PC-9 (cell line): ENCODE measurements at regions of chr4 and their contacts with region 1.

Region 1: GRCh38 chr4:108683479-108683878 is 33.1 kb downstream of the OSTC start:
- DNase-seq: no peak
- H3K4me3 ChIP-seq: no peak overlapping the region
- H3K27ac ChIP-seq: no peak overlapping the region
- H3K4me1 ChIP-seq: no peaks in the 10 kb centered on the region
- H3K27me3 ChIP-seq: no peaks in the 10 kb centered on the region
- CTCF ChIP-seq: peak; percentile 34; the same call in 1 of the 2 replicates

Region 2: DNA sequence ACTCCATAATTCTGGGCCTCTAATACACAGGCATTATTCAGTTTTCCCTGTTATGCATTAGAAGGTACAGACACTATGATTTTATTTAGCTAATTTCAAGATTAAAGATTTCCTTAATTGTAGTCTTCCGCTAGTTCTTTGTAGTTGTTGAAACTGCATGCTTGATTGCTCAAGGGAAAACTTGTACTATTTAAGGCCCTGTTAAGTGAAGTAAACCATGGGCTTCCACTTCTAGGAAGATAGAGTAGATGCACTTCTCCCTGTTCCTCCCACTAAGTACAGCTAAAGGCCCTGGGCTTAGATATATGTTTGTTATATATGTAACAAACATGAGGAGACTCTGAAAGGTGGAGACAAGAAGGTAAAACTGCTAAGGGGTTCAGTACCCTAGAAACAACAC is 298.9 kb before region 1 on chr4:
- CTCF ChIA-PET with region 1: no interaction called
- POLR2A ChIA-PET with region 1: no interaction called
- intact Hi-C with region 1: no loop called
- DNase-seq: no peak
- H3K4me3 ChIP-seq: no peak overlapping the region
- H3K27ac ChIP-seq: no peak overlapping the region
- H3K4me1 ChIP-seq: no peaks in the 10 kb centered on the region
- H3K27me3 ChIP-seq: no peaks in the 10 kb centered on the region
- CTCF ChIP-seq: no peak

Region 3: DNA sequence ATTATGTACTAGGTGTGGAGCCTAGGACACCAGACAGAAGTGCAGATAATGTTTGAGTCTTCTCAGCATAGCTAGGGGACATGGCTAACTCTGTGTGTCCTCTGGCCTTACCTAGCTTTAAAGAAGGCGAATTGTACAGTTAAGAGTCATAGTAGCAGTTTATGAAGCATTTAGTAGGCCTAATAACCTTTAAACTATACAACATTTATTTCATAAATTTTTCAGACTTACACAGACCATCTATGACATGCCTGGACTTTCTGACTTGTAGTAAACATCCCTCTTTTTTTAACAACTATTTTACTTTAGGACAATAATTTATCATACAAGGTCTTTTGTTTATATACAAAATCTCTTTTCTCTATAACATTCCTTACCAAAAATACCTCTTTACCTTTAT is 42.0 kb after region 1 on chr4:
- CTCF ChIA-PET with region 1: no interaction called
- POLR2A ChIA-PET with region 1: no interaction called
- intact Hi-C with region 1: no loop called
- DNase-seq: no peak
- H3K4me3 ChIP-seq: no peak overlapping the region
- H3K27ac ChIP-seq: no peak overlapping the region
- H3K4me1 ChIP-seq: no peaks in the 10 kb centered on the region
- H3K27me3 ChIP-seq: no peaks in the 10 kb centered on the region
- CTCF ChIP-seq: no peak

Region 4: DNA sequence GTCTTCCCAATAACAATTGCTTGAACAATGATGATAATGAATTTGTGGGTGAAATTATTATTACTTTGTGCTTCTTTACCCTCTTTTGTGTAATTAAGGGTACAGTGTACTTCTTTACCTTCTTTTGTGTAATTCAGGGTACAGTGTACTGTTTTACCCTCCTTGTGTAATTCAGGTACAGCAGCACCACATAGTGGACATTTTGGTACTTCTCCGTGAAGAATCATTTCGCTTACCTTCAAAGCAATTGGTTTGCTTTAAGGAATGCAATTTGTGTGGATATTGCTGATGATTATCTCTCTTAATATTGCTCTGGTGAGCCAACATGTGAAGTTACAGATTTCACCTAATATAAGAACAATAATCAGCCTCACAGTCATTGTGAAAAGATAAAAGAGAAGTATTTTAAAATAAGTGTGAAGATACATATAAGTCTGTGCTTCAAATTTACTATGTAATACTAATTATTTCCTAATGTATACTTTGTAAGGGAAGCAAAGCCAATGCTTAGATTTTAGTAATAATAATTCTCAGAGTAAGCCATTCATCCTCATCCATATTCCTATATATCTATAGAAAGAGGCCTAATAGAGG is 723.0 kb after region 1 on chr4:
- CTCF ChIA-PET with region 1: no interaction called
- POLR2A ChIA-PET with region 1: no interaction called
- intact Hi-C with region 1: loop called (anchors 5 kb)
- DNase-seq: peak in 1 of 2 experiments; percentile 4
- H3K4me3 ChIP-seq: no peak overlapping the region
- H3K27ac ChIP-seq: no peak overlapping the region
- H3K4me1 ChIP-seq: no peaks in the 10 kb centered on the region
- H3K27me3 ChIP-seq: no peaks in the 10 kb centered on the region
- CTCF ChIP-seq: peak; percentile 70